Common myeloid progenitor, CD34-positive (primary cell): ENCODE measurements at regions of chr11 and their contacts with region 1.

Region 1: GRCh38 chr11:117907251-117907981 is 21.8 kb downstream of the TMPRSS13 start:
- DNase-seq: peak; percentile 75 to 92 (median 91)
- H3K4me3 ChIP-seq: peak overlapping the region in 3 of 7 experiments; percentile 13 to 57 (median 14)
- H3K27ac ChIP-seq: peak overlapping the region in 1 of 2 experiments; percentile 58
- H3K4me1 ChIP-seq: peaks cover 0 to 27% (median 7%) of the 10 kb centered on the region in 4 experiments
- H3K27me3 ChIP-seq: no peaks in the 10 kb centered on the region

Region 2: GRCh38 chr11:117597071-117597470 is 310.3 kb before region 1 on chr11:
- CTCF ChIA-PET with region 1: no interaction called
- POLR2A ChIA-PET with region 1: no interaction called
- DNase-seq: peak; percentile 54 to 86 (median 84)
- H3K4me3 ChIP-seq: no peak overlapping the region
- H3K27ac ChIP-seq: no peak overlapping the region
- H3K4me1 ChIP-seq: no peaks in the 10 kb centered on the region
- H3K27me3 ChIP-seq: peaks cover 4 to 34% (median 7%) of the 10 kb centered on the region in 5 experiments

Region 3: DNA sequence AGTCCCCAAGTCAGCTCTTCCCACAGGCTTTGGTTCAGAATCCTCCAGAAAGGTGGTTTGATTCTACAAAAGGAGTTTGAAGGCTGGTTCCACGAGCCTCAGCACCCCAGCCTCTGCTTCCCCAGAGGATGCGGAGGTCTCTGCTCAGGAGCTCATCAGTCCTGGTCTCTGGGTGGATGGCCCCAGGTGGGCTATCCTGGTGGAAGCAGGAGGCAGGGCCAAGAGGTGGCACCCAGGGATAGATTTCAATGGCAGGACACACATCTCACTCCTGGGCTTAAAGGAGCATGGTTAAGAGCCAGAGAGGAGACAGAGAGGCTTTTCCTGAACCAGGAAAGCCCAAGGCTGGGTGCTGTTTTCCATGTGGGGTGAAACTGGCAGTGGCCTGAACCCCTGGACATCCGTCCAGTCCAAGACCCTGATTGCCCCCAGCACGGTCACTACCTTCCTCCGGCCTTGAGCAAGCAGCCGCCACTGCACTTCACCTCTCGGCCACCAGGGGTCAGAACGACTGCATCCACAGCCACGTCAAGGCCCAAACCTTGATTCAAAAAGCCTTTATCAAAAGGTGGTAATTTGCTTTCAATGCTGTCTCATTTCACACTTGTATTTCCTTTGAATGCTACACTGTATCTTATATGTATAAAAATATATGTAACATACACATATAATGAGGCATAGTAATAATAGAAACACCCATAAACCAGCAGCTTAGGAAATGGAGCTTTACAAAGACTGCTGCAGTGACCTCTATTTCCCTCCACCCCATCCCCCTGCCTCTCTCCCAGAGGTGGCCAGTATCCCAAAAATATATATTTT is 63.5 kb before region 1 on chr11:
- CTCF ChIA-PET with region 1: interaction called, 78 read pairs
- POLR2A ChIA-PET with region 1: no interaction called
- DNase-seq: peak; percentile 59 to 80 (median 73)
- H3K4me3 ChIP-seq: no peak overlapping the region
- H3K27ac ChIP-seq: no peak overlapping the region
- H3K4me1 ChIP-seq: peaks cover 0 to 18% (median 14%) of the 10 kb centered on the region in 4 experiments
- H3K27me3 ChIP-seq: no peaks in the 10 kb centered on the region

Region 4: GRCh38 chr11:117919781-117920221 is 12.4 kb after region 1 on chr11:
- CTCF ChIA-PET with region 1: interaction called, 14 read pairs
- POLR2A ChIA-PET with region 1: interaction called, 3 read pairs
- DNase-seq: no peak
- H3K4me3 ChIP-seq: no peak overlapping the region
- H3K27ac ChIP-seq: no peak overlapping the region
- H3K4me1 ChIP-seq: peaks cover 0 to 16% (median 5%) of the 10 kb centered on the region in 4 experiments
- H3K27me3 ChIP-seq: no peaks in the 10 kb centered on the region

Region 5: GRCh38 chr11:117932067-117932370 is 24.6 kb after region 1 on chr11:
- CTCF ChIA-PET with region 1: interaction called, 14 read pairs
- POLR2A ChIA-PET with region 1: no interaction called
- DNase-seq: peak in 2 of 3 donors; percentile 28 to 35
- H3K4me3 ChIP-seq: no peak overlapping the region
- H3K27ac ChIP-seq: no peak overlapping the region
- H3K4me1 ChIP-seq: peaks cover 11 to 78% (median 30%) of the 10 kb centered on the region in 4 experiments
- H3K27me3 ChIP-seq: no peaks in the 10 kb centered on the region

Region 6: GRCh38 chr11:117970400-117971024 is 63.1 kb after region 1 on chr11:
- CTCF ChIA-PET with region 1: no interaction called
- POLR2A ChIA-PET with region 1: no interaction called
- DNase-seq: peak; percentile 65 to 90 (median 89)
- H3K4me3 ChIP-seq: peak overlapping the region in 4 of 7 experiments; percentile 3 to 26 (median 22)
- H3K27ac ChIP-seq: no peak overlapping the region
- H3K4me1 ChIP-seq: peaks cover 4 to 68% (median 47%) of the 10 kb centered on the region in 4 experiments
- H3K27me3 ChIP-seq: no peaks in the 10 kb centered on the region

Region 7: DNA sequence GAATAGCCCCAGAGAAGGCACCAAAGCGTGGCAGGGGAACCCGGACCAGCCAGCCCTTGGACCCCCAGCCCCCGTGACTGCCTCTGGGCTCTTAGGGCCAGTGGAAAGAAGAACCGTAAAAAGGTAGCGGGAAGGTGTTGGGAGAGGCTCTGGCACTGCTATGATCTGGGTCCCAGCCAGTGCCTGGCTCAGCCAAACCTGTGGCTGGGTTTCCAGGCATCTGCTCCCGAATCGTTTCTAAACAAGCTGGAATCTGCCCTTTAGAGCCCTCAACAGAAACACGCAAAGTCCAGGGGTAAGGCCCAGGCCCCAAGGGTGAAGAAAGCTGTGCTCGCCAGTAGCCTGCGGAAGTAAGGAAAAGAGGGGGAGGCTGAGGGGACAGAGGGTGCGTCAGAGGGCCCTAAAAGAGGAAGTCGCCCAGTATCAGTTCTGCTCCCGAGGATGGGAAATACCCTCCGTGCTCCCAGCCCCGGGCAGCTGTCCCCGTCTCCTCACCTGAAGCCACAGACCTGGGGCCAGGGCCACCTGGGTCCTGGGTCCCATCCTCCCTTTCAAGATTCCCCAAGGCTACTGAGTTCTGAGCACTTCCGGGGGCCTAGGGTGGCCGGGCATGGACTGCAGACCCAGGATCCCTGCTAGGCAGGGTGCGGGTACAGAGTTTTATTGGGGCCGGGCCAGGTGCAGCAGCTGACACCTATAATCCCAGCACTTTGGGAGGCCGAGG is 103.5 kb after region 1 on chr11:
- CTCF ChIA-PET with region 1: no interaction called
- POLR2A ChIA-PET with region 1: no interaction called
- DNase-seq: peak; percentile 88 to 95 (median 94)
- H3K4me3 ChIP-seq: peak overlapping the region in 3 of 7 experiments; percentile 14 to 25 (median 22)
- H3K27ac ChIP-seq: peak overlapping the region in 1 of 2 experiments; percentile 67
- H3K4me1 ChIP-seq: peaks cover 18 to 95% (median 82%) of the 10 kb centered on the region in 4 experiments
- H3K27me3 ChIP-seq: no peaks in the 10 kb centered on the region

Region 8: DNA sequence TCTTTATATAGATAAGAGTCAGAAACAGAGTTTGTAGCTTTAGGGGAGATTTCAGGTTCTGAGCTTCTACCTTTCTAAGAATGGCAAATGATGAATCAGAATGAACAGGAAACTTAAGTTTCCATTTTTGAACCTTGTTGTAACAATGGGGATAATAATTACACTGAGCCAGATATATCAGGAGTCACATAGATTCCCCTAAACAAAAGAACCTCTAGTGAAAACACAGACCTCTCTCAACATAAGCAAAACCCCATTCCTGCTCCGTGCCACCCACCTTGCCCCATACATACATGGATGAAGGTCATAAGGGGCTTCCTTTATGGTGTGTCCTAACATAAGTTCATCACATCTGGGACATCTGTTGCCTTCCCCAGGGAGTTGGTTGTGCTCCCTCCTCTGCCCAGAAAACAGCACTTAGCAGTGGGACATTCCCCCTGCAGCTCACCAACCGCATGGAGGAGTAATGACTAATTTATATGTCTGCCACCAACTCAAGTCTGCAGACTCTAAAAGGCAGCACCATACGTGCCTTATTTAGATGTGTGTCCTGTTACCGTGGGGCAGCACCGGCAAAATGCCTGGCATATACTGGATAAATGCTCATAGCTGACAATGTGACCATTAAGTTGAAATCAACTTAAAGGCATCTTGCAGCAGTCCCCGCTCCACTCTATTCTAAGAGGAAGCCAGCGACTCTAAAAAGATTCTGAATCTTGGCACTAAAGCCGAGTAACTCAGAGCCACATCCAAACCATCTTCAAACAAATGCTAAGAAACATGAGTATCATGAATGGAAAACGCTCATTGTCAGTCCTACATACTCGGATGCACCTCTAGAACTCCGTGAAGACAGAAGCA is 309.4 kb after region 1 on chr11:
- CTCF ChIA-PET with region 1: no interaction called
- POLR2A ChIA-PET with region 1: no interaction called
- DNase-seq: peak in 2 of 3 donors; percentile 54 to 64
- H3K4me3 ChIP-seq: peak overlapping the region in 3 of 7 experiments; percentile 10 to 35 (median 26)
- H3K27ac ChIP-seq: no peak overlapping the region
- H3K4me1 ChIP-seq: peaks cover 41 to 88% (median 80%) of the 10 kb centered on the region in 4 experiments
- H3K27me3 ChIP-seq: no peaks in the 10 kb centered on the region